Dorsolateral prefrontal cortex (tissue), 120 donors: ENCODE measurements at regions of chr5 and their contacts with region 1.

Region 1: DNA sequence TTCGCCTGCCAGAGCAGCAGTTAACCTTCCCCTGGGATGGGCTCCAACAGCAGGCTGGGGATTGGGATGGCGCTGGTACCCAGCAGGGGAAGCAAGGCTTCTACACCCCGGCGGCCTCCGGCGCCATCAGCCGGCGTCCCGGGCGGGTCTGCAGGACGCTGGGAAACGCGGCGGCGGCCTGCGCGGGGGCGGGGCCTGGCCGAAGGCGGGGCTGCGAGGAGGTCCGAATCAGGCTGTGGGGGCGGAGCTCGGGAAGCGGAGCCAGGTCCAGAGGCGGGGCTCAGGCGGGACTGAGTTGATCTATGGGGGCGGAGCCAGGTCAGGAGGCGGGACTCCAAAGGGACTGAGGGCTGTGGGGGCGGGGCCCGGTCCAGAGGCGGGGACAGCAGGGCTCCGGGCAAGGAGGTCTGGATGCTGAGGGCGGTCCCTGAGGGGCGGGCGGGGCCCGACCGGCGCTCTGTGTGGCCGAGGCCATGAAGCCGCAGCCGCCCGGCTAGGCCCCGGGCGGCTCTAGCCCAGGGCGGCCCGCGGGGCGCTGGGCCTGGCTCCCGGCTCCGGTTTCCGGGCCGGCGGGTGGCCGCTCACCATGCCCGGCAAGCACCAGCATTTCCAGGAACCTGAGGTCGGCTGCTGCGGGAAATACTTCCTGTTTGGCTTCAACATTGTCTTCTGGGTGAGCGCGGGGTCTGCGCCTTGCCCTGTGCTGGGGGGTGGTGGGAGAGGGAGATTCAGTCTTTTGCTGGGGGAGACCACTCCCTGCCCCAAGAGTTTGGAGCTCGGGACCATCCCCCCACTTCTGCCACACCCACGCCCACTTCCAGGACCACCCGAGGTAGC is at the start of gene TSPAN17:
- DNase-seq: peak; percentile 99 to 100 (median 100)
- H3K4me3 ChIP-seq: peak within 1 kb of the TSS; percentile 66 to 91 (median 80)
- H3K27ac ChIP-seq: peak within 1 kb of the TSS in 55 of 59 donors; percentile 39 to 90 (median 80)
- H3K27me3 ChIP-seq: no peaks in the 10 kb centered on the region
- CTCF ChIP-seq: peak in 54 of 56 donors; percentile 18 to 71 (median 47)
- total RNA-seq, gene TSPAN17: 13.7 to 59.5 (median 32.9) TPM

Region 2: DNA sequence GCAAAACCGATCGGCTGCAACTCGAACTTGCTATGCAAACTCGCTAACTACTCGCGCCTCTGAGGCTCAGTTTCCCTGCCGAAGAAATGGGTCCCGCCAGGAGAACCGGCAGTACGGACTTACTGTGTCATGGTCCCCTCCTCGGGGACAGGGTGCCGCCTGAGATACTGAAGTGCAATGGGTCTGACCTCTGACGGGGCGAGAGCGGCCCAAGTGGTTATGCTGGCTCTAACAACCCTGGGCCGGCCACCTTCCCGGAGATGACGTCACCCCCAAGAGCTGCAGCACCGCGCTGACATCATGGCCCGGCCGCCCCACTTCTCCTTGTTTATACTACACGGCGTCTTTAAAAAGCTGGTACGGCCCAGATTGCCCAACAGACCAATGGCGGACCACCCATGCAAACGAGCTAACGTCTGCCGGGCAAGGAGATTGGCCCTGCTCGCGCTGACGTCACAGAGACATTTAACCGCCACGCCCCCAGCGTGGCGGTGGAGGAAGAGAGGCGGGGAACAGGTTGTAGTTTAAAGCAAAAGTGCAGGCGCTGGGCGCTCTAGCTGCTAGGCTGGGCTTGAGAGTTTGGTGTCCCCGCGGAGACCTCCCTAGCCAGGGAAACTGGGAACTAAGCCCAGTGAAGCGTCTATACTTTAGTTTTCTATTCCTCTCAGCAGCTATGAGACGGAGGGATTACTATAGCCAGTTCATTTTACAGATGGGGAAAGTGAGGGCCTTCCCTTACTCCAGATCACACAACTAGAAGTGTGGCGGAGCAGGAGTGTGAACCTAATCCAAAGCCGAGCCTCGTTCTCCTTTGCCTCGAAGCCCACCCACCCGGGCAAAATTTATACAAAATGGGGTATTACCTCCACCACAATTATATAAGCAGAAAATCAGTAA is 109.4 kb before region 1 on chr5:
- intact Hi-C with region 1: loop called in 1 of 2 experiments (anchors 5 kb)
- DNase-seq: peak; percentile 98 to 100 (median 100)
- H3K4me3 ChIP-seq: peak overlapping the region; percentile 72 to 100 (median 92)
- H3K27ac ChIP-seq: peak overlapping the region; percentile 74 to 100 (median 98)
- H3K27me3 ChIP-seq: no peaks in the 10 kb centered on the region
- CTCF ChIP-seq: peak in 10 of 56 donors; percentile 12 to 38 (median 14)

Region 3: DNA sequence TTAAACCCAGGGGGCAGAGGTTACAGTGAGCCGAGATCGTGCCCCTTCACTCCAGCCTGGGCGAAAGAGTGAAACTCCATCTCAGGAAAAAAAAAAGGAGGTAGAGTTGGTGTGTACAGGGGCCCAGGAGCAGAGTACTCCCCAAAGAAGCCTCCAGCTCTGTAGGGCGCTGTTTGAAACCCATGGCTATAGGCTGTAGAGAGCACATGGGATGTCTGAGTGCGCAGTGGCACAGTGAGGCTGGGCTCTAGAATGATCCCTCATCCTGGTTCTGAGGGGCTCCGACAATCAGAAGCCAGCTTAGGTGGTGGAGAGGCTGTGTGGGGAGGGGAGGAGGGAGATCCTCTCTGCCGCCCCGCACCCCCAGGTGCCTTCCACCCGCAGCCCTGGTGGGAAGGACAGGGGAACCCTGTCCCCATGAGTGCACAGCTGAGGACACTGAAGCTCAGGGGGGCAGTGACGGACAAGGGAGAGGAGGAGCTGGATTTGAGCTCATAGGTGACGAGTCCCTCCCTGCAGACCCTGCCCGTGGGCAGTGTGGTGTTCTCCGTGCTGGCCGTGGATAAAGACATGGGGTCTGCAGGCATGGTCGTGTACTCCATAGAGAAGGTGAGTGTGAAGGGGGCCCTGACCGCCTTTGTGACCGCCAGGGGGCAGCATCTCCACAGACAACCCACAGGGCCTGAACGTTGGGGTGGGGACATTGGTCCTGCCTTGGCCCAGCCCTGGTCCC is 73.5 kb before region 1 on chr5:
- intact Hi-C with region 1: loop called (anchors 5 kb)
- DNase-seq: peak; percentile 67 to 85 (median 80)
- H3K4me3 ChIP-seq: no peak overlapping the region
- H3K27ac ChIP-seq: no peak overlapping the region
- H3K27me3 ChIP-seq: peaks cover 0 to 17% (median 0%) of the 10 kb centered on the region in 45 donors
- CTCF ChIP-seq: peak; percentile 59 to 96 (median 84)

Region 4: DNA sequence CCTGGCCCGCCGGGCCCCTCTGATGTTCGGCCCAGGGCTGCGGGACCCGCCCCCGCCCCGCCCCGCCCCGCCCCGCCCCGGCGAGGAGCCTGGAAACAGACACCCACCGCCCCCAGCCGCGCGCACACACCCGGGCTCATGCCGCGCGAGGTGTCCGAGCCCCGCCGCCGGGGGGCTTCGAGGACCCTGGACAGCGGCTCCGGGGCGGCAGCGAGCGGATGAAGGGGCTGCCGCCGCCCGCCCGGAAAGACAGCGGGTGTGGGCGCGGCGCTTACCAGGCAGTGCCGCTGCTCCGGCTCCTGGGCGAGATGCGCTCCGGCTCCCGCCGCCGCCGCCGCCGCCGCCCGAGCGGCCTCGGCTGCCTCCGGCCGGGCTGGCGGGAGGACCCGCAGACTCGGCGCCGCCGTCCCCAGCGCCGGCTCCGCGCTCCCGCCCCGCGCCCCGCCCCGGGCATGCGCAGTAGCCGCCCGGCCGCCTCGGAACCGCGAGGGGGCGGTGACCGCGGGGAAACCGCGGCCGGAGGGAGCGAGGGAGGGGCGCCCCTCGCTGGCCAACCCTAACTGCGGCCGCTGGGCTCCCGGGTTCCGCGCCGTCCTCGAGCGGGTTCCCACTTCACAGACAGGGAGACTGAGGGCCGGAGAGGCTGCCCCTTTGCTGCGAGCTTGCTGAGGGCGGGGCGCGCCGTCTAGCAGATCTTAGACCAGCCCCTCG is 37.4 kb before region 1 on chr5 and contains the start of gene GPRIN1:
- intact Hi-C with region 1: loop called in 1 of 2 experiments (anchors 5 kb)
- DNase-seq: peak in 2 of 10 donors; percentile 78 to 84
- H3K4me3 ChIP-seq: peak within 1 kb of the TSS; percentile 45 to 76 (median 66)
- H3K27ac ChIP-seq: peak within 1 kb of the TSS in 43 of 59 donors; percentile 28 to 85 (median 66)
- H3K27me3 ChIP-seq: no peaks in the 10 kb centered on the region
- CTCF ChIP-seq: peak in 48 of 56 donors; percentile 13 to 57 (median 35)
- total RNA-seq, gene GPRIN1: 13.1 to 60.8 (median 43.9) TPM